ENCODE measurements at regions of chr12 and their contacts with region 1.

Region 1: DNA sequence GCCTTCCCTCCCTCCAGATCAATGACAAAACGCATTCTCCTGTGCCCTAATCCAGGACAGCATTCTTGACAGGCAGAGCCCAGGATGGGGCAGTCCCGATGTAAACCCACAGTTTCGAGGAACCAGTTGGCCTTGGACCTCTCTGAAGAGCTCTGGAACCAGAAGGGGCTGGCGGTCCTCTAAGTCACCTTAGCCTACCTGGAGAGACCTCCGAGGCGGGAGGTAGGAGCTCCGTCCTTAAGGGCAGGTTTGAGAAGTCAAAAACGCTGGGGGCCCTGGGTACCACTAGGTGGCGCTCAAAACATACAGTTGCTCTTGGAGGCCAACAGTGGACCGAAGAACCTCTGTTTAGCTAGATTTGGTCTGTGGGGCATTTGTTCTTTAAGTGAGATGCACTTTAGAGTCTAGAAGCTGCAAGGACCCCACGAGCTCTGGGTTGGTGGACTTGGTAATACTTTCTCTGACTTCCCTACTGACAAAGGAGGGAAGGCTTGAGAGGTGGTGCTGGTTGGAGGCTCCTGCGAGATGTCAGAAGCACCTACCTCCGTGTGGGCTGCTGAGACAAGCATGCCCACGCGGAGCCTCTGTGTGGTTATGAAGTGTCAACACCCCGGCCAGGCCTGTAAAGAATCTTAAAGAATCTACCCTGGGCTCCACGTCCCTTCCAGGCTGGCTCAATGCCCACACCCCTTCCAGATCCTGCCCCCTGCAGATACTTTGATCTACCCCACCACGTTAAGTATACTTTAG is 74.8 kb upstream of the CHST11 start:
- DNase-seq: peak; percentile 91
- ATAC-seq: peak; percentile 84
- H3K4me3 Mint-ChIP-seq: no peak overlapping the region
- H3K27ac Mint-ChIP-seq: no peak overlapping the region
- H3K4me1 Mint-ChIP-seq: peaks cover 10% of the 10 kb centered on the region
- H3K27me3 Mint-ChIP-seq: peaks cover 5% of the 10 kb centered on the region
- CTCF ChIP-seq: peak; percentile 86

Region 2: GRCh38 chr12:104535369-104535768 is 153.5 kb after region 1 on chr12:
- CTCF ChIA-PET with region 1: interaction called, 13 read pairs
- POLR2A ChIA-PET with region 1: no interaction called
- intact Hi-C with region 1: no loop called
- DNase-seq: no peak
- ATAC-seq: no peak
- H3K4me3 Mint-ChIP-seq: no peak overlapping the region
- H3K27ac Mint-ChIP-seq: no peak overlapping the region
- H3K4me1 Mint-ChIP-seq: peaks cover 51% of the 10 kb centered on the region
- H3K27me3 Mint-ChIP-seq: no peaks in the 10 kb centered on the region
- CTCF ChIP-seq: no peak

Region 3: GRCh38 chr12:104627990-104628830 is 246.3 kb after region 1 on chr12:
- CTCF ChIA-PET with region 1: interaction called, 13 read pairs
- POLR2A ChIA-PET with region 1: no interaction called
- intact Hi-C with region 1: no loop called
- DNase-seq: no peak
- ATAC-seq: no peak
- H3K4me3 Mint-ChIP-seq: no peak overlapping the region
- H3K27ac Mint-ChIP-seq: no peak overlapping the region
- H3K4me1 Mint-ChIP-seq: peaks cover 17% of the 10 kb centered on the region
- H3K27me3 Mint-ChIP-seq: no peaks in the 10 kb centered on the region
- CTCF ChIP-seq: no peak

Region 4: GRCh38 chr12:104825408-104825807 is 443.5 kb after region 1 on chr12:
- CTCF ChIA-PET with region 1: interaction called, 6 read pairs
- POLR2A ChIA-PET with region 1: interaction called, 3 read pairs
- intact Hi-C with region 1: loop called (anchors 5 kb)
- DNase-seq: peak; percentile 14
- ATAC-seq: no peak
- H3K4me3 Mint-ChIP-seq: no peak overlapping the region
- H3K27ac Mint-ChIP-seq: no peak overlapping the region
- H3K4me1 Mint-ChIP-seq: peaks cover 4% of the 10 kb centered on the region
- H3K27me3 Mint-ChIP-seq: no peaks in the 10 kb centered on the region
- CTCF ChIP-seq: peak; percentile 17

Region 5: DNA sequence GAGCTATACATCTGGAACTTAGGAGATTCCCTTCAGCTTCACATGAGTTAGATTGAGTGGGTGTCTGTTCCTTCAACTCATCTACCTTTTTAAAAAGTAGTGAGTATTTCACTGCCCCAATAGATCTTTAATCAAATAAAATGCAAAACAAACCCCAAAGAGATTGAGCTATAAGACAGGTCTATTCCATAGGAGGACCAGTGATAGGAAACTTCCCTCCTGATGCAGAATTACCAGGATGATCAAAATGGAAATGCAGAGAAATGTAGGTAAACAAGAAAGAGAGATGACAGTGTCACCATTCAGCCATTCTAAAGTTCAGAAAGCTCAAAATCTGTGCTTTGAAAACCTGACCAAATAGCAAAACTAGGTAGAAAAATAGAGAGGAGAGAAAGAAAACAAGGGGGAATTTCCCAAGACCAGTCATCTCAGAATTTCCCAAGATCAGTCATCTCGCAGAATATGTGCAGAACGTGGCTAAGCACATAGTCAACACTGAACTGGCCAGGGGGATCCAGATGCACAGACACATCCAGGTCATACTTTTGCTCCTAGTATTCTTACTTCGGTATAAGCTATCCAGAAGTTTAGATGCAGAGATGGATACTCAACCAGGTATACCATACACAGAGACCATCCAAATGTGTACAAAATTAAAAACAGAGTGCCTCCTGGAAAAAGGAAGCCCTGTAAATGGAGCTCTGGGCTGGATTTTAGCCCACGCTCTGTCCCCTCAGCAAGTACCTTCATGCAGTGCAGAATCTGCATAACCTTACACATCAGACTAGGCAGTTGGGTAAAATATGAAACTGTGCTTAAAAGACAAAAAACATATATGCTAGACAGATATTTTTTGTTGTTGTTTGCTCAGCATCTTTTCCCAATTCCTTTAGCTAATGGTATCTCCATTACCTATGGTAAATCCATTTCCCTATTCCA is 548.8 kb after region 1 on chr12:
- CTCF ChIA-PET with region 1: interaction called, 11 read pairs
- POLR2A ChIA-PET with region 1: no interaction called
- intact Hi-C with region 1: no loop called
- DNase-seq: peak; percentile 67
- ATAC-seq: peak; percentile 96
- H3K4me3 Mint-ChIP-seq: no peak overlapping the region
- H3K27ac Mint-ChIP-seq: peak overlapping the region; percentile 80
- H3K4me1 Mint-ChIP-seq: peaks cover 31% of the 10 kb centered on the region
- H3K27me3 Mint-ChIP-seq: peaks cover 2% of the 10 kb centered on the region
- CTCF ChIP-seq: no peak

Measured in activated CD8-positive, alpha-beta T cell treated with anti-CD3 and anti-CD28 coated beads for 36 hours (primary cell).